ENCODE measurements at regions of chr10 and their contacts with region 1.

Region 1: GRCh38 chr10:103278862-103279298 is 1.9 kb downstream of the INA start:
- DNase-seq: peak; percentile 74
- H3K4me3 Mint-ChIP-seq: peak overlapping the region; percentile 2
- H3K27ac Mint-ChIP-seq: no peak overlapping the region
- H3K4me1 Mint-ChIP-seq: peaks cover 13% of the 10 kb centered on the region
- H3K27me3 Mint-ChIP-seq: peaks cover 59% of the 10 kb centered on the region

Region 2: DNA sequence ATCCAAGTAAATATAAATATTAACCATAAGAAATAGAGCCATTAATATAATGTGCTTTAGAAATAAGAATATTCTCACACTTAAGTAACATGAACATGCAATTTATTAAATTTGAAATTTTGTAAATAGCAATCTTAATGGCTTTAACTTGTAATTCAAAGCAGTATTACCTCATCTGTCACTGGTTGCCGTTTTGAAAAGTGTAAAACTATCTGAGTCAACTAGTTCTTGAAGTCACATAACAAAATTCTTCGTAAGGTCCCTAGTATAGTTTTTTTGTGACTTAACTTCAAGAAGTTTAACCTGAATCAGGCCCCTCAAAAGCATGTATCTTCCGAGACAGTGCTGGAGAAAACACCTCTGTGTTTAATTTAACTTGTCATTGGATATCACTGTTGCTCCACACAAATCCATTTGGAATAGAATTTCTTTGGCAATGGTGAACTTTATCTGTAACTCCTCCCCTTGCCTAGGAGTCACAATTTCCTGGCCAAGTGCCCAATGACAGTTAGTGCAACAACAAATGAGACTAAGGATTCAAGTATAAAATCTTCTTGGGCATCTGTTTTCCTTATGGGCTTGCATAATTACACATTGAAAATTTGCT is 132.9 kb before region 1 on chr10:
- CTCF ChIA-PET with region 1: no interaction called
- intact Hi-C with region 1: no loop called
- DNase-seq: peak; percentile 60
- H3K4me3 Mint-ChIP-seq: no peak overlapping the region
- H3K27ac Mint-ChIP-seq: no peak overlapping the region
- H3K4me1 Mint-ChIP-seq: peaks cover 8% of the 10 kb centered on the region
- H3K27me3 Mint-ChIP-seq: no peaks in the 10 kb centered on the region

Region 3: GRCh38 chr10:103265717-103266329 is 13.1 kb before region 1 on chr10:
- CTCF ChIA-PET with region 1: no interaction called
- intact Hi-C with region 1: loop called (anchors 1 kb)
- DNase-seq: peak; percentile 76
- H3K4me3 Mint-ChIP-seq: no peak overlapping the region
- H3K27ac Mint-ChIP-seq: no peak overlapping the region
- H3K4me1 Mint-ChIP-seq: no peaks in the 10 kb centered on the region
- H3K27me3 Mint-ChIP-seq: peaks cover 17% of the 10 kb centered on the region

Region 4: GRCh38 chr10:103983367-103983911 is 704.6 kb after region 1 on chr10:
- CTCF ChIA-PET with region 1: no interaction called
- intact Hi-C with region 1: no loop called
- DNase-seq: peak; percentile 26
- H3K4me3 Mint-ChIP-seq: peak overlapping the region; percentile 7
- H3K27ac Mint-ChIP-seq: peak overlapping the region; percentile 72
- H3K4me1 Mint-ChIP-seq: peaks cover 59% of the 10 kb centered on the region
- H3K27me3 Mint-ChIP-seq: no peaks in the 10 kb centered on the region

Region 5: GRCh38 chr10:104067525-104067924 is 788.6 kb after region 1 on chr10:
- CTCF ChIA-PET with region 1: no interaction called
- intact Hi-C with region 1: no loop called
- DNase-seq: no peak
- H3K4me3 Mint-ChIP-seq: no peak overlapping the region
- H3K27ac Mint-ChIP-seq: no peak overlapping the region
- H3K4me1 Mint-ChIP-seq: no peaks in the 10 kb centered on the region
- H3K27me3 Mint-ChIP-seq: peaks cover 2% of the 10 kb centered on the region

Measured in activated naive CD4-positive, alpha-beta T cell treated with anti-CD3 and anti-CD28 coated beads for 36 hours (primary cell).